HEK293 (cell line): ENCODE measurements at regions of chr1 and their contacts with region 1.

Region 1: GRCh38 chr1:209827384-209828262 is at the start of gene UTP25:
- H3K4me3 ChIP-seq: peak within 1 kb of the TSS; percentile 87
- H3K27ac ChIP-seq: peak within 1 kb of the TSS; percentile 47
- H3K4me1 ChIP-seq: no peaks in the 10 kb centered on the region
- CTCF ChIP-seq: peak; percentile 81

Region 2: DNA sequence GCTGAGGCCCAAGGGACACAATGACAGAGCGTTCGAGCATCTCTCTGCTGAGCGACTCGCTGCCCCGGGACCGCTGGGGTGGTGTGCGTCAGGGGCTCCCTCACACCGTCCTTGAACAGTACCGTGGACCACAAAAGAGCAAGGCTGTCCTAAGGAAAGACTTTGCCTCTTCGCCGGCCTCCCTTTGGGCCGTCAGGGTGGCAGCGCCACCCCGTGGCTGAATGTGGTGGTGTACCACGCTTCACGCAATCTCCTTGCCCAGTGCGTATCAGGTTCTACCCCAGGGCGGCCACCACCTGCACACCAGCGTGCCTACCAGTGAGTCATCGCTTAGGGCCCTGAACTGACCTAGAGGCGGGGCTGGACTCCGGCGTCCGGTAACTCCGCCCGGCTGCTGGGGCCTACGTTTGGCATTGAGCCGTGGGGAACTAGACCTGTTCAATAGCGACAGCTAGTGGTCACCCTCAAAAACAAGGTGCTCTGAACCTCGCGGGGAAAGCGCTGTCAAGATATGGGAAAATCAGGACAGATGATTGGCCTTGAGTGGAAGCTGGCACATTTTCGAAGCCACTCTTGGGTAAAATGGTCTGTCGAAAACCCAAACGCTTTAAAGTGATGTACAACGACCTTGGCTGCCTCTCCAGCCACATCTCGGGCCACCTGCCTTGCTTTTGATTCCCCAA is 79.9 kb before region 1 on chr1:
- CTCF ChIA-PET with region 1: interaction called, 12 read pairs
- POLR2A ChIA-PET with region 1: no interaction called
- H3K4me3 ChIP-seq: no peak overlapping the region
- H3K27ac ChIP-seq: no peak overlapping the region
- H3K4me1 ChIP-seq: peaks cover 6% of the 10 kb centered on the region; the same call in 1 of the 2 replicates
- CTCF ChIP-seq: peak; percentile 98

Region 3: GRCh38 chr1:209797978-209798639 is 29.5 kb before region 1 on chr1:
- CTCF ChIA-PET with region 1: interaction called, 49 read pairs
- POLR2A ChIA-PET with region 1: interaction called, 7 read pairs
- H3K4me3 ChIP-seq: no peak overlapping the region
- H3K27ac ChIP-seq: no peak overlapping the region
- H3K4me1 ChIP-seq: peaks cover 11% of the 10 kb centered on the region; the same call in 1 of the 2 replicates
- CTCF ChIP-seq: no peak

Region 4: GRCh38 chr1:209815931-209816341 is 11.7 kb before region 1 on chr1:
- CTCF ChIA-PET with region 1: interaction called, 111 read pairs
- POLR2A ChIA-PET with region 1: interaction called, 5 read pairs
- H3K4me3 ChIP-seq: no peak overlapping the region
- H3K27ac ChIP-seq: no peak overlapping the region
- H3K4me1 ChIP-seq: no peaks in the 10 kb centered on the region
- CTCF ChIP-seq: no peak

Region 5: GRCh38 chr1:209860293-209860881 is 32.8 kb after region 1 on chr1:
- CTCF ChIA-PET with region 1: interaction called, 11 read pairs
- POLR2A ChIA-PET with region 1: no interaction called
- H3K4me3 ChIP-seq: no peak overlapping the region
- H3K27ac ChIP-seq: no peak overlapping the region
- H3K4me1 ChIP-seq: peaks cover 7% of the 10 kb centered on the region; the same call in 1 of the 2 replicates
- CTCF ChIP-seq: peak; percentile 40

Region 6: GRCh38 chr1:210021145-210021860 is 193.7 kb after region 1 on chr1:
- CTCF ChIA-PET with region 1: no interaction called
- POLR2A ChIA-PET with region 1: no interaction called
- H3K4me3 ChIP-seq: no peak overlapping the region
- H3K27ac ChIP-seq: no peak overlapping the region
- H3K4me1 ChIP-seq: no peaks in the 10 kb centered on the region
- CTCF ChIP-seq: no peak

Region 7: GRCh38 chr1:210031473-210031872 is 203.8 kb after region 1 on chr1:
- CTCF ChIA-PET with region 1: no interaction called
- POLR2A ChIA-PET with region 1: no interaction called
- H3K4me3 ChIP-seq: no peak overlapping the region
- H3K27ac ChIP-seq: no peak overlapping the region
- H3K4me1 ChIP-seq: no peaks in the 10 kb centered on the region
- CTCF ChIP-seq: no peak

Region 8: DNA sequence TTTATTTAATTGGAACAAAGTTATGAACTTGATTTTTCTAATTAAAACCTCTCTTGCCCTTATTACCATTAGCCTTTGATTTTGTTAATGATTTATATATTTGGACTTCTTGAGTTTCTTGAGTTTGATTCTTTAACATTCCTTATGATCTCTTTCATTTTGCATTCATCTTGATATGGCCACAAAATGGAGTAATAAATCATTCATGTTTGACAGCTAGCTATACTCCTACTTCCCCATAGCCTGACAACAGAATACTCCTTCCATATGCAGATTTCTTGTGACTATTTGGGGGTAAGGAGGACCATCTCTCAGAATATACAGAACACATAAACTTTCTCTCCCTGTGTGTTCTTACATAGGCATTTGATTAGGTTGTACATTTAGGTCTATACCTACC is 230.0 kb after region 1 on chr1:
- CTCF ChIA-PET with region 1: no interaction called
- POLR2A ChIA-PET with region 1: no interaction called
- H3K4me3 ChIP-seq: no peak overlapping the region
- H3K27ac ChIP-seq: no peak overlapping the region
- H3K4me1 ChIP-seq: peaks cover 2% of the 10 kb centered on the region; the same call in 1 of the 2 replicates
- CTCF ChIP-seq: no peak